ENCODE measurements at regions of chr6 and their contacts with region 1.

Region 1: DNA sequence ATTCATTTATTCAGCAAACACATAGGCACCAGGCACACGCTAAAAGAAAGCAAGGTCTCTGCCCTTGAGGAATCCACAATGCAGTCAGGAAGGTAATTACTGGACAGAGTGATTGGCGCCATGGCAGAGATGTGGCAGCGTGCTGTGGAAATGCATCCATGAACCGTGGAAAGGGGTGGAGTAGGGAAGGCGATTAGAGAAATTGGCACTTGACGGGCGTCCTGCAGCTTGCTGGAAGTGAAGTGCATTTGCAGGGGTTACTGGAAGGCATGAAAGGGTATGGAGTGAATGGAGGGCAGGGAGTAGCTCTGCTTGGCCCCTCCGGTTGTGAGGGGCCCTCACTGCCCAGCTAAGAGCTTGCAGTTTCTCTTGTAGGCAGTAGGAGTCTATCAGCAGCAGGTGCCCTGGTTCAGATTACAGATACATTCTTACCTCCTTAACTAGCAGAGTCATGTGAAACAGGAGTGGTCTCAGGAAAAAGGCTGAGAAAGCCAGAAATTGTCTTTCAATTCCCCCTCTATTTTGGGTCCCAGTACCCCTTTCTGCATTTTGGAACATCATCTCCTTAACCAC is 122.5 kb upstream of the TIAM2 start:
- DNase-seq: no peak
- H3K4me3 ChIP-seq: no peak overlapping the region
- H3K27ac ChIP-seq: no peak overlapping the region
- H3K4me1 ChIP-seq: peaks cover 5% of the 10 kb centered on the region
- H3K27me3 ChIP-seq: no peaks in the 10 kb centered on the region
- CTCF ChIP-seq: no peak
- POLR2A ChIP-seq: no peak

Region 2: GRCh38 chr6:155240905-155241600 is 368.4 kb after region 1 on chr6:
- intact Hi-C with region 1: loop called (anchors 5 kb)
- DNase-seq: no peak
- H3K4me3 ChIP-seq: no peak overlapping the region
- H3K27ac ChIP-seq: no peak overlapping the region
- H3K4me1 ChIP-seq: no peaks in the 10 kb centered on the region
- H3K27me3 ChIP-seq: no peaks in the 10 kb centered on the region
- CTCF ChIP-seq: no peak
- POLR2A ChIP-seq: no peak